ENCODE measurements at regions of chr7 and their contacts with region 1.

Region 1: GRCh38 chr7:7595451-7595850 is 28.8 kb downstream of the MIOS start:
- DNase-seq: peak; percentile 48 to 69 (median 67)
- H3K4me3 ChIP-seq: no peak overlapping the region
- H3K27ac ChIP-seq: no peak overlapping the region
- H3K4me1 ChIP-seq: peaks cover 0 to 3% (median 0%) of the 10 kb centered on the region in 4 experiments
- H3K27me3 ChIP-seq: no peaks in the 10 kb centered on the region

Region 2: DNA sequence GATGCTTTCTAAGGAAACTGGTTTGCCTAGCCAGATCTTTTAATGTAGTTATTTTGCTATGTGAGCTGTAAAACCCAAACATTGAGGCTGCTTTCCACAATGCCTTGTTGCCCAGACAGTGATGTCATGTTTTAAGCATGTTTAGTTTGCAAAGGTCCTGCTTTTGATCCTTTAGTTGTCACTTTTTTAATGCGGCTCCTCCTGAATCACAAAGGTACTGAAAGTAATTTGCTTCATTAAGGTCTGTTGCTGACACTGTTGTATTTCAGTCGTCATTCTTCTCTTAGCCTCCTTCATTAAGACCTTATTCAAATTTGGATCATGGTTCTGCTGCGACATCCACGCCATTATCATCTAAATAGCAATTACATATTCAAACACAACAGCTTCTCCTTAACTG is 112.4 kb after region 1 on chr7:
- CTCF ChIA-PET with region 1: no interaction called
- POLR2A ChIA-PET with region 1: no interaction called
- DNase-seq: no peak
- H3K4me3 ChIP-seq: no peak overlapping the region
- H3K27ac ChIP-seq: no peak overlapping the region
- H3K4me1 ChIP-seq: no peaks in the 10 kb centered on the region
- H3K27me3 ChIP-seq: no peaks in the 10 kb centered on the region

Region 3: DNA sequence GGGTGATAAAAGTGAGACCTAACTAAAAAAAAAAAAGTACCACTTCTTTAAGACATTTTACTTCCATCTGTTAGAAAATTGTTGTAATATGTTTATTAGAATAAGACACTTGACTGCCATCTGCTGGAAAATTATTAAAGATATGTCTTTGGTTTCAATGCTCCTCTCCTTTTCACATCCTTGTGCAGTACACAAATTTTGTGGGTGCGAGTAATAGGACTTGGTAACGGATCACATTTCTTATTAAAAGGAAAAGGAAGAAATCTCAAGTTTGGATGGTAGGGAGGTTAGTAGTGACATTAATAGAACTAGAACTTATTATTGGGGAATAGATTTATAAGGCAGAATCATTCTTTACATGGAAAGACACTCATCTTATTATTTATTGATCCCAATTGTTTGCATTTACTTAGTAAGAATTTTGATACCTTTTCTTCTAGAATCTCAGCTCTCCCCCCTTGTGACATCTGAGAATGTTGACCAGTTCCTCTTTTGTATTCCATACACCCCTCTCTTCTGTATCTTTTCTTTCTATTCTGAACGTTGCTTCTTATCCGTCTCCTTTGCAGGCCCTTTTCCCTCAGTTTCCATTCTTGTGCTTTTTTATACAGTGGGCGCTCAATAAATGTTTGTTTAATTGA is 166.0 kb after region 1 on chr7:
- CTCF ChIA-PET with region 1: interaction called, 20 read pairs
- POLR2A ChIA-PET with region 1: no interaction called
- DNase-seq: peak; percentile 61 to 80 (median 77)
- H3K4me3 ChIP-seq: peak overlapping the region in 6 of 7 experiments; percentile 59 to 97 (median 77)
- H3K27ac ChIP-seq: peak overlapping the region; percentile 67 to 80
- H3K4me1 ChIP-seq: peaks cover 0 to 17% (median 8%) of the 10 kb centered on the region in 4 experiments
- H3K27me3 ChIP-seq: no peaks in the 10 kb centered on the region

Region 4: DNA sequence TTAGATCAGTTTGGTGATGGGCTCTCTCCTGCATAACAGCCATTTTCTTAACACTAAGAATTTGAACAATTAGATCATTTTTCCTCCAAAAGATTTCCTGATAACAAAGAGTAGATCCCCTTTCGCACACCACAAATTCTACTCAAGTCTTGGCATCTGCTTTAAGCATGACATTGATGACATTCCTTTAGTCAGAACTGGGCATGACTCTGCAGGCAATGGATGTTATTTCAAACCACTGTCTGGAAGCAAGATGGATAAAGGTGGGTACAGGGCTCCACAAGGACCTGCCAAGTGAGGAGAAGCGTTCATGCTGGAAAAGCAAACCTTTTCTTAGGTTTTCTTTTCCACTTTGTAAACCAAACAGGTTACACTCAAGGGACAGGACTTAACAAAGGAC is 496.7 kb after region 1 on chr7:
- CTCF ChIA-PET with region 1: interaction called, 12 read pairs
- POLR2A ChIA-PET with region 1: no interaction called
- DNase-seq: no peak
- H3K4me3 ChIP-seq: no peak overlapping the region
- H3K27ac ChIP-seq: no peak overlapping the region
- H3K4me1 ChIP-seq: no peaks in the 10 kb centered on the region
- H3K27me3 ChIP-seq: no peaks in the 10 kb centered on the region

Region 5: GRCh38 chr7:8109196-8110022 is 514.0 kb after region 1 on chr7:
- CTCF ChIA-PET with region 1: no interaction called
- POLR2A ChIA-PET with region 1: no interaction called
- DNase-seq: no peak
- H3K4me3 ChIP-seq: no peak overlapping the region
- H3K27ac ChIP-seq: no peak overlapping the region
- H3K4me1 ChIP-seq: peaks cover 0 to 3% (median 1%) of the 10 kb centered on the region in 4 experiments
- H3K27me3 ChIP-seq: no peaks in the 10 kb centered on the region

Region 6: DNA sequence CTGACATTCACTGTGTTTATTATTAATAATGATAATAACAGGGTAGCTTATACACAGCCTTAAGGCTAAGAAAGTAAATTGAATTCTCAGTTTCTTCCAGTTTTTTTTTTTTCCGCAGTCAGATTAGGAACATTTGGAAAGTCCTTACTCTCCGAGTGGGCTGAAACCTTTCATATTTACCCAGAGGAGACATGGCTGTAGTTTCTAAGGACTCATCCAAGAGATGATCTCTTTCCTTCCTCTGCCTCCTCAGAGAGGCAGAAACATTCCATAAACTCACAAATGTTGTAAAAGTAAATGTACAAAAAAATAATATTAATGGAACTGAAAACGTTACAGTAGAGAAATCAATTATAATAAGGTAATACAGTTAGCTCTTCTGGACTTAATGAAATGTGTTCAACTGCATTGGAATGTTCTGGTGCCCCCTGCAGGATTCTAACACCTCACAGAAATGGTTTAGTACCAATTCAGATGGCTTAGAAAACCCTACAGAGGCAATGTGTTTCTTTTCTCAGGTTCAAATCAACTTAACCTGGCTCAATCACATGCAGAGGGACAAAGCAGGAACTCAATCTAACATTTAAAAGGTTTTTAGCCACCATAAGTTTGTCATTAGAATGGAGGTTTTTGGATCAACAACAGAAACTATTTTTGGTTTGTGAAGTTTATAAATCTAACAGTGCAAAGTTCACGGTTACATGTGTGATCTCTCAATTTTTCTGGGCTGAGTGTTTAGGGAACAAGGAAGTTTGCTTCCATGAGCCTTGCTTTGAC is 594.9 kb after region 1 on chr7:
- CTCF ChIA-PET with region 1: interaction called, 15 read pairs
- POLR2A ChIA-PET with region 1: no interaction called
- DNase-seq: peak; percentile 66 to 75 (median 72)
- H3K4me3 ChIP-seq: no peak overlapping the region
- H3K27ac ChIP-seq: no peak overlapping the region
- H3K4me1 ChIP-seq: peaks cover 2 to 11% (median 8%) of the 10 kb centered on the region in 4 experiments
- H3K27me3 ChIP-seq: no peaks in the 10 kb centered on the region

Region 7: GRCh38 chr7:8217200-8218068 is 622.0 kb after region 1 on chr7:
- CTCF ChIA-PET with region 1: interaction called, 16 read pairs
- POLR2A ChIA-PET with region 1: no interaction called
- DNase-seq: peak; percentile 72 to 91 (median 87)
- H3K4me3 ChIP-seq: no peak overlapping the region
- H3K27ac ChIP-seq: no peak overlapping the region
- H3K4me1 ChIP-seq: no peaks in the 10 kb centered on the region
- H3K27me3 ChIP-seq: no peaks in the 10 kb centered on the region

Measured in common myeloid progenitor, CD34-positive (primary cell).